Left ventricle myocardium superior (tissue), 1 donor: ENCODE measurements at regions of chr2 and their contacts with region 1.

Region 1: GRCh38 chr2:119753041-119753929 is 6.4 kb upstream of the PTPN4 start:
- DNase-seq: no peak
- ATAC-seq: peak; percentile 69

Region 2: DNA sequence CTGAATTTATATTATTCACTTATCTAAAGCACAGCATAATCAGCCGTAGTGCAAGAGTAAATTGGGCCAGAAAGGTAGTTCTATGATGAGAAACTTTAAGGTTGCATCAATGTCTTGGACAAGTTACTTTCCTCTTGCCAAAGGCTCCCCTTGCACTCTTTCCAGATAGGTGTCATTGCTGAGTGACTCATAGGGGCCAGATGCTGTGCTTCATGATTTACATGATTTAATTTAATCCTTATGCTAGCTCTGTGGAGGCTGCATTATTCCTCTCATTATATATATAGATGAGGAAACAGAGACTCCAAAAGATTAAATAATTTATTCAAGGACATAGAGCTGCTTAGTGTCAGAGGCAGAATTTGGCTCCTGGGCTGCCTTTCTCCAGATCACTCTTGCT is 204.0 kb before region 1 on chr2:
- intact Hi-C with region 1: no loop called
- DNase-seq: no peak
- ATAC-seq: no peak

Region 3: DNA sequence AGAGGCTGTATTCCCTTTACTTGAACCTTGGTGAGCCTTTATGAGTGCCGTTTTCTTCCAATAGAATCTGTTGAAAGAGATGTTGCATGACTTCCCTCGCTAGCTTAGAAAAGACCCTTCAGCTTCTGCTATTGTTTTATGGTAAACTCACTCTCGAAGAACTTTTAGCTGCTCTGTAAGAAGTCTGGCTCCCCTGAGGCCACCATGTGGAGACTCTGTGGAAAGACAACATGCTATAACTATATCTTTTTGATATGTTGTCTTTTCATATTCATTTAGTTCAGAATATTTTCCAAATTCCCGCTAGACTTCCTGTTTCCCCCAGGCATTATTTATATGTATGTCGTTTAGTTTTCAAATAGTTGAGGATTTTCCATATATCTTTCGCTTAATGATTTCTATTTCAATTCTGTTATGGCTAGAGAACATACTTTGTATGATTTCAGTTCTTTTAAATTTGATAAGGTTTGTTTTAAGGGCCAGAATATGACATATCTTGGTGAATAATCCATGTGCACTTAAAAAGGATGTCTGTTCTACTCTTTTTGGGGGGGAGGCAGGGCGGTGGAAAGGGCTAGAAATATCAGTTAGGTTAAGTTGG is 70.5 kb after region 1 on chr2:
- intact Hi-C with region 1: loop called (anchors 2 kb)
- DNase-seq: no peak
- ATAC-seq: peak; percentile 65